Mammary epithelial cell (primary cell): ENCODE measurements at regions of chr16 and their contacts with region 1.

Region 1: GRCh38 chr16:77705351-77705750 is 17.0 kb upstream of the NUDT7 start:
- DNase-seq: no peak
- H3K4me3 ChIP-seq: no peak overlapping the region
- H3K27ac ChIP-seq: no peak overlapping the region
- H3K4me1 ChIP-seq: no peaks in the 10 kb centered on the region
- H3K27me3 ChIP-seq: no peaks in the 10 kb centered on the region
- CTCF ChIP-seq: no peak

Region 2: GRCh38 chr16:77657016-77657415 is 48.3 kb before region 1 on chr16:
- CTCF ChIA-PET with region 1: no interaction called
- dilution Hi-C with region 1: no loop called
- in situ Hi-C with region 1: no loop called
- intact Hi-C with region 1: no loop called
- DNase-seq: no peak
- H3K4me3 ChIP-seq: no peak overlapping the region
- H3K27ac ChIP-seq: no peak overlapping the region
- H3K4me1 ChIP-seq: no peaks in the 10 kb centered on the region
- H3K27me3 ChIP-seq: no peaks in the 10 kb centered on the region
- CTCF ChIP-seq: no peak

Region 3: DNA sequence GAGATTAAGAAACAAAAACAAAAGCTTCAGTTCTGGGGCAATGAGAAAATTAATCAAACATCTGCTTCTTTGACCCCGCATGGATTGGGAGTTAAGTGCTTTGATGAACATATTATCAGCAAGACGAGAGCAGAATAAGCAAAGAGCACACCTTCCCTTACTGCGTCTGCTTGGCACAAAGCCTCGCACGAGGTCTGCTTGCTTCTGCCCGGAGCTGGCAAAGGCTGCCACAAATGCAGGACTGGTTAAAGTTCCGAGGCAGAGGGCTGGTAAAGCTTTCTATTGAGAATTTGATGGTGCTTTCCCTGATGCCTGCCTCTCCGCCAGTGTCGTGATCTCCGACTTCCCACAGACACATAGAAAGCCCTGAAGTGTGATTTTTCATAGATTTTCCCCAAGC is 100.0 kb after region 1 on chr16:
- CTCF ChIA-PET with region 1: no interaction called
- dilution Hi-C with region 1: loop called (anchors 5 kb)
- in situ Hi-C with region 1: no loop called
- intact Hi-C with region 1: no loop called
- DNase-seq: no peak
- H3K4me3 ChIP-seq: no peak overlapping the region
- H3K27ac ChIP-seq: no peak overlapping the region
- H3K4me1 ChIP-seq: no peaks in the 10 kb centered on the region
- H3K27me3 ChIP-seq: no peaks in the 10 kb centered on the region
- CTCF ChIP-seq: no peak